Natural killer cell (primary cell): ENCODE measurements at regions of chr1 and their contacts with region 1.

Region 1: DNA sequence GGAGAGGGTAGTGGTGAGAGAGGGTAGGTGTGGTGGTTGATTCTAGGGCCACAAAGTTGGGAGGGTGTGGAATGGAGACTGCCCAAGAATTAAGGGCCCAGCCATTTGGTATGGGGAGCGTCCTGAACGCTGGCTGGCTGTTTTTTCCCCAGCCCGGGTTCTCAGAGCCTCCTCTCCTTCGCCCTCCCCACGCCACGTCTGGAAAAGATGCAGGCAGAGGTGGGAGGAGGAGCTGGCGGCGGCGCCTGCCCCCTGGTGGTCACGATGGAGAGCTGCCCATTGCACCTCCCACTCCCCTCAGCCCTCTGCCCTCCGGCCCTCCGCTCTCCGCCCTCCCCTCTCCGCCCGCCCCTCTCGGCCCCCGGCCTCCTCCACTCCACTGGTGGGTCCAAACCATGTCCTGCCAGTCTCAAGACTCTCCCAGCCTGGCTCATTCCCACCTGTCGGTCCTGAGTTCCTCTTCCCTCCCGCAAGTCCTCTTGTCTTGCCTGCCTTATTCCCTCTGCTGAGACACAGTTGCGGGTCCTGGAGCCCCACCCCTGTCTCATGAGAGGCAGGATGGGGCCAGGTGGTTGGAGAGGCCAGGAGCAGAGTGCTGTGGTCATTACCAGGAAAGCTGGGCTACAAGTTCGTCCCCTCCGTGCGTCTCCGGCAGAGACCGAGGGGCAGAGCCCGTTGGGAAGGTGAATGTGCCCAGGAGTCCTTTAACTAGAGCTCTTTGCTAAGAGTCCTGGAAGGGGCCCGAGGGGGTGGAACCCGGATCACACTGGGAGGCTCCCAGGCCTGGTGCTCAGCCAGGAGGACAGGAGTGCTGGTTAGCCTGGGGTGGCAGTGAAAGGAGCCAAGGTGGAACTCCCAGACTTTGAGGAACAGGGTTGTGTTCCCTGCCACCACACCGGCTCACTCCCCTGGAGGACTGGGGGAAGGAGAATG is 22.6 kb downstream of the ETNK2 start:
- DNase-seq: peak; percentile 65 to 84
- ATAC-seq: peak; percentile 78 to 98 (median 94)
- H3K4me3 ChIP-seq: no peak overlapping the region
- H3K4me3 Mint-ChIP-seq: no peak overlapping the region
- H3K27ac ChIP-seq: no peak overlapping the region
- H3K27ac Mint-ChIP-seq: peak overlapping the region; percentile 57 to 84
- H3K4me1 ChIP-seq: peaks cover 7% of the 10 kb centered on the region
- H3K4me1 Mint-ChIP-seq: peaks cover 12 to 13% of the 10 kb centered on the region in 2 donors
- H3K27me3 ChIP-seq: no peaks in the 10 kb centered on the region
- H3K27me3 Mint-ChIP-seq: no peaks in the 10 kb centered on the region
- CTCF ChIP-seq: peak; percentile 91

Region 2: DNA sequence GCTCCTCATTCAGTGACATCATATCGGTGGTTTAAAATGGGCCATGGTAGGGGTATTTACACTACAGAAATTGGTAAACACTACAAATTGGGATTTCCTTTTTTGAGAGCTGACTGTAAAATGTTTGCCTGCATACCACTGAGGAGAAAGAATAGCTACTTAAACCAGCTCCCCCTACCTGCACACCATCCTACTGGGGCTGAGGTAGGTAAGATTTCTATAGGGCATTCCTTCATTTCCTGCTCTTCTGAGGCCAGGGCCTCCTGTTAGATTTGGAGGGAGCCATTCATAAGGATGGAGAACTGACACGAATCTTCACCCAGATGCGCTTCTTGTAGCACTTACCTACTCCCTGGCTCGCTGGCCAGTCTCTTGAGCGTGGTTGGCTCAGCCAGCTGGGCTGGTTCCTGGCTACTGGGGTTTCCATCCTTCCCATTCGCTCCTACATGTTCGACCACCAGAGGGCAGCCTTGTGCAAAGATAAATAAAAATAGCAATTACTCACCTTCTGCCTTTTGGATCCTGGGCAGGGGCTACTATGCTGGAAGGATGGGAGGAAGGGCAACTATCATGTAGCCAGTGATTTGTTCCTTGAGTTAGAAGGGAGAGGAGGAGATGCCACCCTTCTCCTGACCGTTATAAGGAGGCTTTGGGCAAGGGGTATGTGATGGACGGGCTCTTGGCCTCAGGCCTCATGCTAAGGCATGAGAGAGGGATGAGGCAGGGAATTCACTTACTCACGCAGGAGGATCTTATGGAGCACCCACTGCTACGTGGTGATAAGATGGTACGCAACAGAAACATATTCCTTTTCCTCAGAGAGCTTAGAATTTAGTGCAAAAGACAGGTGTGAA is 624.6 kb before region 1 on chr1:
- intact Hi-C with region 1: loop called (anchors 2 kb)
- DNase-seq: peak; percentile 71 to 88
- ATAC-seq: peak; percentile 76 to 87 (median 84)
- H3K4me3 ChIP-seq: no peak overlapping the region
- H3K4me3 Mint-ChIP-seq: no peak overlapping the region
- H3K27ac ChIP-seq: no peak overlapping the region
- H3K27ac Mint-ChIP-seq: no peak overlapping the region
- H3K4me1 ChIP-seq: peaks cover 3% of the 10 kb centered on the region
- H3K4me1 Mint-ChIP-seq: peaks cover 0 to 4% of the 10 kb centered on the region in 2 donors
- H3K27me3 ChIP-seq: no peaks in the 10 kb centered on the region
- H3K27me3 Mint-ChIP-seq: peaks cover 0 to 7% of the 10 kb centered on the region in 2 donors
- CTCF ChIP-seq: peak; percentile 75

Region 3: GRCh38 chr1:203593723-203594122 is 535.5 kb before region 1 on chr1:
- intact Hi-C with region 1: loop called (anchors 5 kb)
- DNase-seq: peak; percentile 42 to 71
- ATAC-seq: peak; percentile 79 to 94 (median 91)
- H3K4me3 ChIP-seq: no peak overlapping the region
- H3K4me3 Mint-ChIP-seq: no peak overlapping the region
- H3K27ac ChIP-seq: no peak overlapping the region
- H3K27ac Mint-ChIP-seq: peak overlapping the region in 1 of 2 donors; percentile 48
- H3K4me1 ChIP-seq: peaks cover 5% of the 10 kb centered on the region
- H3K4me1 Mint-ChIP-seq: peaks cover 0 to 13% of the 10 kb centered on the region in 2 donors
- H3K27me3 ChIP-seq: no peaks in the 10 kb centered on the region
- H3K27me3 Mint-ChIP-seq: peaks cover 0 to 7% of the 10 kb centered on the region in 2 donors
- CTCF ChIP-seq: peak; percentile 46

Region 4: DNA sequence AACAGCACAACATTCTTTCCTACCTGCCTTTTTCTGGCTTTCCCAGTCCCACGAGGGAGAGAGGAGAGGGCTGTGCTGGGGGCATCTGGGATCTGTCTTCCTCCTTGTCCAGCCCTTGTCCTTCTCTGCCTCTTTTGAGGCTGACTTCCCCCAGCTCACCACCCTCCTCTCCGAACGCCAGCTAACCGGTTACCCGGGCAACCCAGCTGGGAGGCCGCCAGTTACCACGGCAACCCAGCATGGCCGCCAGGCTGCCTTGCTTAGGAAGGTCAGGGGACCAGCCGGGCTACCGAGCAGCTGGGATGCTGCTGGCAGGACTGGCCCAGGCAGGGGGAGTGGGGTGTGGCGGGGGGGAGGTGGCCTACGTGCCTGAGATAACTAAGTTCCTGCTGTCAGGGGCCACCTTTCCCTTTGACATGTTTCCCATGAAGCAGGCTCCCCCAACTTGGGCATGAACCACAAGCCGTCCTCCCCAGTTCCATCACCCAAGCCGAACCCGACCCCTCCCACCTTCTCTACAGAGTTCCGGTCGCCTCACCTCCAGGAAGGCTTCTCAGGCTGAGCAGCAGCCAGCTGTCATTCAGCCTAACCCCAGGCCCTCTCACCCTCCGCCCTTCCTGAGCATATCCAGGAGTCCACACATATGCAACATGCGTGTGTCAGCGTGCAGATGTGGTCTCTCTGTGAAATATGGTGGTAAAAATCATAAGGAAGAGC is 221.8 kb after region 1 on chr1:
- intact Hi-C with region 1: no loop called
- DNase-seq: no peak
- ATAC-seq: peak in 2 of 3 donors; percentile 29 to 30
- H3K4me3 ChIP-seq: no peak overlapping the region
- H3K4me3 Mint-ChIP-seq: no peak overlapping the region
- H3K27ac ChIP-seq: no peak overlapping the region
- H3K27ac Mint-ChIP-seq: no peak overlapping the region
- H3K4me1 ChIP-seq: peaks cover 4% of the 10 kb centered on the region
- H3K4me1 Mint-ChIP-seq: no peaks in the 10 kb centered on the region
- H3K27me3 ChIP-seq: peaks cover 2% of the 10 kb centered on the region
- H3K27me3 Mint-ChIP-seq: peaks cover 0 to 6% of the 10 kb centered on the region in 2 donors
- CTCF ChIP-seq: no peak